Endothelial cell of umbilical vein (primary cell): ENCODE measurements at regions of chr19 and their contacts with region 1.

Region 1: GRCh38 chr19:38033658-38034498 is 126.9 kb downstream of the SIPA1L3 start:
- DNase-seq: no peak
- H3K4me3 ChIP-seq: no peak overlapping the region
- H3K27ac ChIP-seq: no peak overlapping the region
- H3K4me1 ChIP-seq: peaks cover 12% of the 10 kb centered on the region
- H3K27me3 ChIP-seq: no peaks in the 10 kb centered on the region
- CTCF ChIP-seq: no peak
- POLR2A ChIP-seq: no peak

Region 2: DNA sequence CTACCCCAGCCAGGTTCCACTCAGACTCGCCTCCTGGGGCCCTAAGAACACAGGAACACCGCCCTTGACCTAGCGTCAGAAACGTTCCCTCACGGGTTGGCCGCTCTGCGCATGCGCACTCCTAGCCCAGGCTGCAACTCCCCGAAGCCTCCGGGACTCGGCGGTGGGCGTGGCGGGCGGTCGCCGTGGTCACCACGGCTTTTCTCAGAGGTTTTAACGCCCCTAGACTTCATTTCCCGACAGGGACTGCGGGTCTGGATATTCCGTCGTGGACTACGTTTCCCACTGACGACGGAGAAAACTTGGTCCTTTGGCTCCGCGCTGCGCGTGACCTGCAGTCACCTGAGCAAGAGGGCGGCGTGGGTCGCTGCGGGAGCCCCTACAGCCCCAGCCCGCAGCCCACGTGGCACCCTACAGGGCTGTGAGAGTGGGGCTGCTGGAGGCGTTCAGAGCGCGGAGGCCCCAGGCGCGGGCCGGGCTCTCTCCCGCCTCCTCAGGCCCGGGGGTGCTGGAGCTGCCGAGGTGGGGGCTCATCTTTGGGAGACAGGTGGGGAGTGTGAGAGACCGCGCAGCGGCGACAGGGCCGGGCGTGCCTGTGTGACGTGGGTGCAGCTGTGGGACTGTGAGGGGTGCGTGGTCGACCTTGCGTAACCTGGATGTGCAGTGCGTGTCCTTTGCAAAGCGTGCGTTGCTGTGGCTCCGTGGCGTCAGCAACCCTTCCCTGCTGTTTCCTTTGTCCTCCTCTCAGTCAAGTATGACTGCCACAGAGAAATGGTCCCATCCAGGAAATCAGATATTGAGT is 216.5 kb before region 1 on chr19:
- CTCF ChIA-PET with region 1: no interaction called
- POLR2A ChIA-PET with region 1: no interaction called
- dilution Hi-C with region 1: no loop called
- intact Hi-C with region 1: no loop called
- DNase-seq: peak; percentile 15
- H3K4me3 ChIP-seq: peak overlapping the region in 1 of 3 experiments; percentile 18
- H3K27ac ChIP-seq: no peak overlapping the region
- H3K4me1 ChIP-seq: no peaks in the 10 kb centered on the region
- H3K27me3 ChIP-seq: no peaks in the 10 kb centered on the region
- CTCF ChIP-seq: no peak
- POLR2A ChIP-seq: no peak

Region 3: DNA sequence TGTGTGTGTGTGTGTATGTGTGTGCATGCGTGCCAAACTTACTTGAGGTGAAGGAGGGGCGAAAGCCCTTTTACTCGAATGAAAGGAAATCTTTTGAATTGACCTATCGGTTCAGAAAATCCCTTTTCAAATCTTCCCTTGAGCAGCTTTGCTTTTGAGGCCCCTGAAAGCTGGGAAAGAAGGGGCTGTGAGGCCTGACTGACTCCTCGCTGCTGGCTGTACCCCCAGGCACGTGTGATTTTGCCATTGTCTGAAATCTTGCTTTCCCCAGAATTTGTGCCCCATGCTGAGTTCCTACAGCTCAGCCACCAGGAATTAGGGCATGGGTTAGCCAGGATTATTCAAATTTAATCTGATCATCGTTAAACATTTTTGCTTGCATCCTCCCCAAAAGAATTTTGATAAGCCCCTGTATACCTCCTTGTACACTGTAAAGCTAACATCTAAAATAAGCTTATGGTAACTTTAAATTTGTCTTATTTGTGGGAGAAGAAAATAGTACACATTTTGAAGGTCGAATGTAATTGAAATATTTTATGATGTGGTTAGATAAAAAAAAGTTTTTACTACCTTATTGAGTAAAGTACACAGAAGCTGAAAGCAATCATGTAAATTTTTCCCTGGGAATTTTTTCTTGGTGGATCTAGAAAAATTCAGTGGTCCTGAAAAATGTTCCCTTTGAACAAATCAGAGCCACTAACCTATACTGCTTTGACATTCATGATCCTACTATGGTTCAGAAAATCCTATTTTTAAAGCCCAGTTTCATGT is 80.2 kb before region 1 on chr19:
- CTCF ChIA-PET with region 1: no interaction called
- POLR2A ChIA-PET with region 1: no interaction called
- dilution Hi-C with region 1: loop called (anchors 5 kb)
- intact Hi-C with region 1: no loop called
- DNase-seq: no peak
- H3K4me3 ChIP-seq: no peak overlapping the region
- H3K27ac ChIP-seq: no peak overlapping the region
- H3K4me1 ChIP-seq: no peaks in the 10 kb centered on the region
- H3K27me3 ChIP-seq: no peaks in the 10 kb centered on the region
- CTCF ChIP-seq: no peak
- POLR2A ChIP-seq: no peak

Region 4: GRCh38 chr19:37999309-38000213 is 34.3 kb before region 1 on chr19:
- CTCF ChIA-PET with region 1: interaction called, 3 read pairs
- POLR2A ChIA-PET with region 1: no interaction called
- dilution Hi-C with region 1: no loop called
- intact Hi-C with region 1: loop called (anchors 1 kb)
- DNase-seq: peak; percentile 89
- H3K4me3 ChIP-seq: no peak overlapping the region
- H3K27ac ChIP-seq: peak overlapping the region; percentile 93
- H3K4me1 ChIP-seq: peaks cover 52% of the 10 kb centered on the region
- H3K27me3 ChIP-seq: no peaks in the 10 kb centered on the region
- CTCF ChIP-seq: no peak
- POLR2A ChIP-seq: no peak